H1 (cell line): ENCODE measurements at regions of chr12 and their contacts with region 1.

Region 1: DNA sequence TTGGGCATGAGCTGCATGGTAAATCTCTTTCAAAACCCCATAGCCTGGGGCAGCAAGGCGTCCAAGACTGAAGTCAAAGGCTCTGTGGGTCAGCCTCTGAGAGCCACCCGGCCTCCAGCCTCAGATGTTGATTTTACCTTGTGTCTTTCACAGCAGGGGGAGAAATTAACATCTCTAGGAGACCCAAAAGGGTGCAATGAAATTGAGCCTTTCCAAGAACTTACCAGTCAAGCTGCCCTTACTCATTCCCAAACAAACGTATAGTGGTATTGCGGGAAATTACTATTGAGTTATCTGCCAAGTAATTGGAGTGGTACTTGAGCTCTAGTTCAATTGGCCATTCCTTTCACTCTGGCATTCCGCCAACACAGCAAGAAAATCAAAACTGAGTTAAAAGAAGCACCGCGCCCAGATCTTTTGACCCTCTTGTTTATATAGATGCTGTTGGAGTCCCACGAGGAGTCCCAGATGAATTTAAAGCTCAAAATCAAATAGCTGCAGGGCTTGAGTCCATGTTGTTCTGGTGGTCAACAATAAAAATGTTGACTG is 380.7 kb upstream of the SYT1 start:
- DNase-seq: no peak
- H3K4me3 ChIP-seq: no peak overlapping the region
- H3K27ac ChIP-seq: no peak overlapping the region
- H3K4me1 ChIP-seq: no peaks in the 10 kb centered on the region
- H3K27me3 ChIP-seq: no peaks in the 10 kb centered on the region
- CTCF ChIP-seq: no peak
- EP300 ChIP-seq: no peak
- POLR2A ChIP-seq: no peak
- RAD21 ChIP-seq: no peak

Region 2: DNA sequence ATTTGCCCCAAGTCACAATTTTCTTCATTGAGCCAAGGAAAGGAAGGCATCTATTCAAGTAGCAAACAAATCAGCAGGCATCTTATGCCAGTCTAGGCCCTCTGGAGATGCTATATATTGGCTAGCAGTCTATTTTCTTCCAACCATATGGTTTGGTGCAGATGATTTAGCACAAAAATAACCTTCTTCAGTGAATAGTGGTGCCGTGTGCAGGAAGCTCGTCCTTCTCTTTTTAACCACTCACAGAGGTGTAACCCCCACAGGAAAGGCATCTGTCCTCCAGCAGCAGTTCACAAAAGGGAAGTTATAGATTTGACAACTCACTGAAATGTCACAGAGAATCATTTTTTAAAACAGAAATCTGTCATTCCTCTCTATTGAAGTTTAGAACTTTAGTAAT is 64.9 kb before region 1 on chr12:
- CTCF ChIA-PET with region 1: no interaction called
- POLR2A ChIA-PET with region 1: no interaction called
- DNase-seq: no peak
- H3K4me3 ChIP-seq: no peak overlapping the region
- H3K27ac ChIP-seq: no peak overlapping the region
- H3K4me1 ChIP-seq: no peaks in the 10 kb centered on the region
- H3K27me3 ChIP-seq: no peaks in the 10 kb centered on the region
- CTCF ChIP-seq: no peak
- EP300 ChIP-seq: no peak
- POLR2A ChIP-seq: no peak
- RAD21 ChIP-seq: no peak

Region 3: DNA sequence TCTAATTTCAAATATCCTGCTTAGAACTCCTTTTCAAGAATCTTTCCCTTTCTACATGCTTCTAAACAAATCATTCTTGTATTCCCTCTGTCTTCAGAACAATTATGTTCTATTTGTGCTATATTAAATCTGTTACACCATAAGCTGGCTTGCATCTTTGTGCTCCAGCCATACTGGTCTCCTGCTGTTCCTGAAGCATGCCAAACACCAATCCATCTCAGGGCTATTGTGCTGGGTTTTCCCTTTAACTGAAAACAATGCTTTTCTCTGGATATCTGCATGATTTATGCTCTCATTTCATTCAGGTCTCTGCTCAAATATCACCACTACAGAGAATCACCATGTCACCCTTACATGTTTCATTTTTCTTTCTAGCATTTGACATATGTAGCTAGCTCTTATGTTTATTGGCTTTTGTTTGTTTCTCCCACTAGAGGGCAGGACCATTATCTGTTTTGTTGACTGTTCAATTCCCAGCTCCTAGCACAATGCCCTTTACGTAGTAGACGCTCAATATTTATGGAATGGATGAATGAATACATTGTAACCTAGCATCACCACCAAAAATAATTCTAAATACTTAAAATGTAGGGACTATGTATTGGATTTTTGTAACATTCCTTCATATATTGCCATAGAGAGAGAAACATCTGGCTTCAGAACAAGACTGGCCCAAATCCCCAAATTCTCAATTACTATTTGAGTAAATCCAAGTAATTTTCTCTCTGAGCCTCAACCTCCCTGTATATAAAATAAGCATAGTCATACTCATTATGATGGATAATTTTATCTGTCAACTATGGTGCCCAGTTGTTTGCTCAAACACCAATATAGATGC is 78.7 kb after region 1 on chr12:
- CTCF ChIA-PET with region 1: interaction called, 12 read pairs
- POLR2A ChIA-PET with region 1: no interaction called
- DNase-seq: no peak
- H3K4me3 ChIP-seq: no peak overlapping the region
- H3K27ac ChIP-seq: no peak overlapping the region
- H3K4me1 ChIP-seq: peaks cover 0 to 3% (median under 1%) of the 10 kb centered on the region in 4 experiments; a peak in 3 of 7 replicates
- H3K27me3 ChIP-seq: no peaks in the 10 kb centered on the region
- CTCF ChIP-seq: peak in 2 of 3 experiments; percentile 27 to 54; a peak in 2 of 4 replicates
- EP300 ChIP-seq: no peak
- POLR2A ChIP-seq: no peak
- RAD21 ChIP-seq: peak; percentile 37 to 53